Heart right ventricle (tissue), 16 donors: ENCODE measurements at regions of chr9 and their contacts with region 1.

Region 1: GRCh38 chr9:137423004-137423874 is at the starts of genes EXD3 and NOXA1:
- DNase-seq: peak; percentile 93 to 97
- ATAC-seq: peak; percentile 93 to 97 (median 96)
- H3K4me3 ChIP-seq: peak within 1 kb of the TSS; percentile 92 to 99 (median 97)
- H3K27ac ChIP-seq: peak within 1 kb of the TSS; percentile 53 to 92 (median 89)
- H3K4me1 ChIP-seq: peaks cover 8 to 41% (median 23%) of the 10 kb centered on the region in 9 donors
- H3K27me3 ChIP-seq: no peaks in the 10 kb centered on the region
- CTCF ChIP-seq: peak; percentile 35 to 88 (median 56)
- total RNA-seq, gene EXD3: 7.8 to 14.0 (median 9.2) TPM
- total RNA-seq, gene NOXA1: 2.5 to 5.3 (median 3.0) TPM

Region 2: GRCh38 chr9:137445275-137445807 is 22.1 kb after region 1 on chr9:
- intact Hi-C with region 1: loop called in 2 of 10 experiments (anchors 1 to 2 kb)
- DNase-seq: peak; percentile 77
- ATAC-seq: peak; percentile 51 to 84 (median 70)
- H3K4me3 ChIP-seq: no peak overlapping the region
- H3K27ac ChIP-seq: no peak overlapping the region
- H3K4me1 ChIP-seq: peaks cover 0 to 21% (median 5%) of the 10 kb centered on the region in 9 donors
- H3K27me3 ChIP-seq: peaks cover 0 to 32% (median 20%) of the 10 kb centered on the region in 7 donors
- CTCF ChIP-seq: peak; percentile 74 to 86 (median 83)

Region 3: DNA sequence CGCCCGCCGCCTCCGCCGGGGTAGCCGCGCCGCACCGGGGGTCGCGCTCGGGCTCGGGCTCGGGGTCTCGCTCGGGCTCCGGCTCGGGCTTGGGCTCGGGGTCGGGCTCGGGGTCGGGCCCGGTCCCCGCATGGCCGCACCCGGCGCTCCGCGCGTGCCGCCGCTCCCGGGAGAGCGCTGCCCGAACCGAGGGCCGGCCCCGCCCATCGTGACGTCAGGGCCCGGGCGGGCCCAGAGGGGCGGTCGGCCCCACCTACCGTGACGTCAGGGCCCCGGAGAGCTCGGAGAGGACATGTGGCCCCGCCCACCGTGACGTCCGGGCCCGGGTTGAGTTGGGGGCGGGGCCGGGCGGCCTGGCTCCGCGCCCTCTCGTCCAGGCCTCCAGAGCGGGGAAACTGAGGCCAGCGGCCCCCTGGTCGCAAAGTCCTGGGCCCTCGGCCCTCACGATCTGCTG is 35.9 kb after region 1 on chr9 and contains the start of gene NSMF:
- intact Hi-C with region 1: loop called in 1 of 10 experiments (anchors 5 kb)
- DNase-seq: peak; percentile 92 to 96
- ATAC-seq: peak; percentile 85 to 95 (median 92)
- H3K4me3 ChIP-seq: peak within 1 kb of the TSS; percentile 45 to 81 (median 68)
- H3K27ac ChIP-seq: peak within 1 kb of the TSS; percentile 3 to 89 (median 72)
- H3K4me1 ChIP-seq: peaks cover 19 to 44% (median 29%) of the 10 kb centered on the region in 9 donors
- H3K27me3 ChIP-seq: peaks cover 0 to 14% (median 0%) of the 10 kb centered on the region in 7 donors
- CTCF ChIP-seq: no peak
- total RNA-seq, gene NSMF: 5.3 to 17.0 (median 9.0) TPM

Region 4: GRCh38 chr9:137487454-137488326 is 64.5 kb after region 1 on chr9:
- intact Hi-C with region 1: no loop called
- DNase-seq: no peak
- ATAC-seq: no peak
- H3K4me3 ChIP-seq: no peak overlapping the region
- H3K27ac ChIP-seq: no peak overlapping the region
- H3K4me1 ChIP-seq: peaks cover 0 to under 1% (median 0%) of the 10 kb centered on the region in 9 donors
- H3K27me3 ChIP-seq: no peaks in the 10 kb centered on the region
- CTCF ChIP-seq: no peak

Region 5: DNA sequence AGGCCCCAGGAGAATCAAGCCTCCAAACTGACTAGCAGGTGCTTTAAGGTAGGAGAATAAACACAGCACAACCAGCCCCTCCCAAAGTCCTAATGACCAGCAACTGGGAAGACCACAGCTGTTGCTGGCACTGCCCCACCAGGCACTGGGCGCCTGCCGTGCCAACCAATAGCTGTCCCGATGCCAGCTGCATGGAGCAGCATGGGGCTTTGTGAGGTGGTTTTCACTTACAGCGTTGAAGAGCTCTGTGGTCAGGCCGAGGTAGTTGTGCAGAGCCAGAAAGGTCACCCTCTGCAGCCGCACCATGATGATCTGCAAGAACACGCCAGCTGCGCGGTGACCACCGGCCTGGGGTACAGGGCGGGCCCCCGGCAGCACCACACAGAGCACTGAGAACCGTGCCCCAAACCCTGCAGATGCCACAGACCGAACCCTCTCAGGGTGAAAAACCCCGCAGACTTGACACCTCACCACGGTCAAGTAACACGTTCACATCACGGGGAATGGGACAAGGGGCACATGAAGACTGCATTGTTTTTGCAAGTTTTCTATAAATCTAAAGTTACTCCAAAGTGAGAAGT is 98.3 kb after region 1 on chr9:
- intact Hi-C with region 1: loop called in 2 of 10 experiments (anchors 10 kb)
- DNase-seq: no peak
- ATAC-seq: no peak
- H3K4me3 ChIP-seq: no peak overlapping the region
- H3K27ac ChIP-seq: no peak overlapping the region
- H3K4me1 ChIP-seq: peaks cover 0 to 4% (median 0%) of the 10 kb centered on the region in 9 donors
- H3K27me3 ChIP-seq: no peaks in the 10 kb centered on the region
- CTCF ChIP-seq: no peak